Prostate gland (tissue), 2 donors: ENCODE measurements at regions of chr1 and their contacts with region 1.

Region 1: DNA sequence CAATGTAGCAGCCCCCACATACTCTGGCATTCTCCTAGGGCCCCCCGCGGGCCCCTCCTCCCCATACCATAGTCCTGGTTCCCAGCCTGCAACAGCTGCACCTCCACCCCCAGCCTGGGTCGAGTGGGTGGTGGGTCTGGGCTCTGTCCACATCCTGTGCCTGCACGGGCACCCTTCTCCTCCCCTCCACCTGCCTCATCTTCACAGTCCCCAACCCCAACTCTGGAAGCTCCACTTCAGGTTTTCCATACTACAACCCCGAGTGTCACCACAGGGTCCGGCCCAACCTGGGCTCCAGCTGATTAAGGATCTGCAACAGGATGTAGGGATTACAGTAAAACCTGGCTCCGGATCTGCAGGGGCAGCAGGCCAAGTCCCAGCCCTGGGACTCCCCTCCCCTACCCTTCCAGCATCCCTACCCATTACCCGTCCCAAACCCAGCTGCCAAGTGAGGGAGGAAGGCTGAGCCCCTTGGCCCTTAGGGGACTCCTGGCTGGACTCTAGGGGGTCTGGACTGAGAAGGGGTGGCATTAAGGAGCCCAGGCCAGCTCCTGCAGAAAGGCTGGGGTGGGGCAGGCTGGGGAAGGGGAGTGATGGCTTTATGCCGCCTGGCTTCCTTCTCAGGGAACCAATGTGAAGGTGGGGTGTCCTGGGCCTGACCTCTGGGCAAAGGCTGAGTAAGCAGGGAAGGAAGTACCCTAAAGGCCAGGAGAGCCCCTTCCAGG is 116.8 kb downstream of the CASZ1 start:
- DNase-seq: peak; percentile 76
- H3K4me3 ChIP-seq: peak overlapping the region in 1 of 2 donors; percentile 3
- H3K27ac ChIP-seq: peak overlapping the region; percentile 91 to 96
- H3K4me1 ChIP-seq: peaks cover 87% of the 10 kb centered on the region
- H3K27me3 ChIP-seq: no peaks in the 10 kb centered on the region
- CTCF ChIP-seq: peak in 1 of 4 experiments; percentile 12
- POLR2A ChIP-seq: no peak

Region 2: GRCh38 chr1:10585948-10586524 is 93.6 kb before region 1 on chr1:
- intact Hi-C with region 1: no loop called
- DNase-seq: no peak
- H3K4me3 ChIP-seq: no peak overlapping the region
- H3K27ac ChIP-seq: no peak overlapping the region
- H3K4me1 ChIP-seq: no peaks in the 10 kb centered on the region
- H3K27me3 ChIP-seq: no peaks in the 10 kb centered on the region
- CTCF ChIP-seq: no peak
- POLR2A ChIP-seq: no peak

Region 3: GRCh38 chr1:10635085-10635896 is 44.4 kb before region 1 on chr1:
- intact Hi-C with region 1: loop called (anchors 5 kb)
- DNase-seq: peak; percentile 95
- H3K4me3 ChIP-seq: no peak overlapping the region
- H3K27ac ChIP-seq: peak overlapping the region; percentile 95 to 98
- H3K4me1 ChIP-seq: peaks cover 64% of the 10 kb centered on the region
- H3K27me3 ChIP-seq: no peaks in the 10 kb centered on the region
- CTCF ChIP-seq: peak in 1 of 4 experiments; percentile 21
- POLR2A ChIP-seq: peak; percentile 58

Region 4: DNA sequence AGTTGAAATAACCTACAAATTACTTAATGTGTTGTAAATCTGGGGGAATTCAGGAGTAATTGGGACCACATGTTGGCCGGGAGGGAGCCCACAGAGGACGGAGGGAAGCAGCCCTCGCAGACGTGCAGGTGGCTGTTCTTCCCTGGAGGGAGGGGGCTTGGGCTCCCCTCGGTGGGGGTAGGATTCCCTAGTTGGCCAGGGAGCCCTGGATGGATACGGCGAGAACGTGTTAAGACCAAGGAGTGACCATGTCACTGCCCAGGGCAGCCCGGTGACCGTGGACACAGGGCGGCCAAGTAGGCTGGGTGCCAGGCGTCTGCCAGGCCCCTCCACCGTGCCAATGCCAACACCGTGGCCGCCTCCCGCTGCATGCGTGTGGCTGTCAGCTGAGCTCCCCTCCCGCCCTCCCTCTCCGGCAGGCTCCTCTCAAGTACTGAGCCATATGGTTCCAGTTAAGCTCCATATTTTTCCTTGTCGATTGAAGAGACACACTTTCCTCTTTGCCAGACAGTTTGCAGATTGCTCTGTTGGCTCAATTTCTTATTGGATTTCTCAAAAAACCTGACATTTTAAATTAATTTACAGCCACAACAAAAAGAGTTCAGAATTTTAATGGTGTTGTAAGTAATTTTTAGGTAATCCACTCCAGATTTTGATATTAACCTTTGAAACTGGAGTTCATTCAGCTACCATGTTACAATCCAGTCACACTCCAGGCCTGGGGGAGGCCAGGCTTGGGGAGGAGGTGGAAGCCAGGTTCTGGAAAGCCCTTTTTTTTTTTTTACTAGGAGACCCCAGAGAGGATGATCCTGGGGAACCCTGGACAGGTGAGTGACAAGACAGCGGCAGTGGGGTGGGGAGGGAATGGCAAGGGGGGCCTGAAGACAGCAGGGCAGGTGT is 45.5 kb after region 1 on chr1:
- intact Hi-C with region 1: loop called (anchors 5 kb)
- DNase-seq: peak; percentile 54
- H3K4me3 ChIP-seq: no peak overlapping the region
- H3K27ac ChIP-seq: peak overlapping the region; percentile 85 to 89
- H3K4me1 ChIP-seq: peaks cover 65% of the 10 kb centered on the region
- H3K27me3 ChIP-seq: no peaks in the 10 kb centered on the region
- CTCF ChIP-seq: no peak
- POLR2A ChIP-seq: no peak